ENCODE measurements at regions of chr7 and their contacts with region 1.

Region 1: DNA sequence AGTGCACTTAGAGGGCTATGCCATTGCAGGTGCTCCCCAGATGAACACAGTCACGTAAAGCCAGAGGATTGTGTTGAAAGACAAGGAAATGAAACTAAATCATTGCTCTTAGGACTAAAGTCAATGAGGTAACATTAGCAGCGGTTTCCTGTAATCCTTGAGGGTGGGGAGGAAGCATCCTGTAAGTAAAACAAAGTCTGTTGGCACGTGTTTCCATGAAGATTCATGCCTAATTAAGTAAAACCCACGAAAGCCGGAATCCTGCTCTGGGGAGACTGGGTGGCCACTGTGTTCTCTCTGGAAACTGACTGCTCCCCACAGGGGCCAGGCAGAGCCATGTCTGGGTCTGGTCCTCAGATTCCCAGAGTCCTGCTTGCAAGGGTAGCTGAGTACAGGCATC is 18.3 kb downstream of the STEAP1B start:
- DNase-seq: peak in 3 of 5 donors; percentile 26 to 58 (median 34)
- ATAC-seq: peak; percentile 29 to 87 (median 62)
- H3K4me3 ChIP-seq: no peak overlapping the region
- H3K27ac ChIP-seq: peak overlapping the region in 8 of 12 donors; percentile 16 to 64 (median 51)
- H3K4me1 ChIP-seq: peaks cover 0 to 12% (median 6%) of the 10 kb centered on the region in 12 donors
- H3K27me3 ChIP-seq: peaks cover 0 to 2% (median 0%) of the 10 kb centered on the region in 9 donors
- CTCF ChIP-seq: no peak
- POLR2A ChIP-seq: no peak

Region 2: GRCh38 chr7:21526007-21526406 is 955.7 kb before region 1 on chr7:
- intact Hi-C with region 1: no loop called
- DNase-seq: no peak
- ATAC-seq: no peak
- H3K4me3 ChIP-seq: no peak overlapping the region
- H3K27ac ChIP-seq: no peak overlapping the region
- H3K4me1 ChIP-seq: no peaks in the 10 kb centered on the region
- H3K27me3 ChIP-seq: no peaks in the 10 kb centered on the region
- CTCF ChIP-seq: peak in 8 of 12 donors; percentile 12 to 40 (median 29)
- POLR2A ChIP-seq: no peak

Region 3: DNA sequence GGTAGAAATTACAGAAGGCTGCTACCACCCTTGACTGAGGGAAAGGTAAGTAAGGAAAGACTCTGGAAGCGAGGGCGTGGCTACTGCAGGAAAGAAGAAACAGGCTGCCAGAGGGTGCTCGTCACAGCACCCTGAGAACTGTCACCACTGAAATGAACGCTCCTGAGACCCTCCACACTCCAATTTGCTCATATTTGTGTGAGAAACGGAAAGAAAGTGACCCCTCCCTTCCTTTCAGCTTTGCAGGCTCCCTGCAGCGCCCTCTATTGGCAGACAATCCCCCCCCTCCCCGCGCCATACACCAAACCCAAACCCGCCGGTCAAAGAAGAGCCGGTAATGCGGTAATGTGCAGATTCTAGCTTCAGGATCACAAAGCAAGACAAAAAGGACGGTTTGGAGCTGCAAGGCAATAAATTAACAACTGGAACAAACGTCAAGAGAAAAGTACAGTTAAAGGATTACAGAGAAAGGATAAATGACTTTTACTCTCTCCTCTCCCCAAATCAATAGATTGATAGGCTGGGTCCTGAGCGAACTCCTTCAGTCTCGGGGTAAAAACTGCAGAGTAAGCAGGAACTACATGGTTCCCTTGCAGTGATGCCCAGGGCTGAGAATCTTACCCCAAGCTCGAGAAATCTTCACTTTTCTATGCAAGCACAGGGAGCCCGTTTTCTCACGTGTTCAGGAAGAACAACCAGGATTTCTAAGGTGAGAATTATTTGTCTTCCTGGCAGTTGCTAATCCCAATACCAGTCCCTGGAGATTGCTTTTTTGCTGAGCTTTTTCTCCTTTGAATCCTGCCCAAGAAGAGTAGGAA is 29.4 kb before region 1 on chr7:
- intact Hi-C with region 1: loop called in 1 of 10 experiments (anchors 1 kb)
- DNase-seq: peak; percentile 48 to 74 (median 57)
- ATAC-seq: peak; percentile 58 to 88 (median 72)
- H3K4me3 ChIP-seq: peak overlapping the region in 9 of 12 donors; percentile 22 to 44 (median 31)
- H3K27ac ChIP-seq: peak overlapping the region in 3 of 12 donors; percentile 23 to 28 (median 24)
- H3K4me1 ChIP-seq: peaks cover 0 to 14% (median 5%) of the 10 kb centered on the region in 12 donors
- H3K27me3 ChIP-seq: peaks cover 0 to 22% (median 0%) of the 10 kb centered on the region in 9 donors
- CTCF ChIP-seq: peak; percentile 51 to 87 (median 76)
- POLR2A ChIP-seq: no peak

Region 4: DNA sequence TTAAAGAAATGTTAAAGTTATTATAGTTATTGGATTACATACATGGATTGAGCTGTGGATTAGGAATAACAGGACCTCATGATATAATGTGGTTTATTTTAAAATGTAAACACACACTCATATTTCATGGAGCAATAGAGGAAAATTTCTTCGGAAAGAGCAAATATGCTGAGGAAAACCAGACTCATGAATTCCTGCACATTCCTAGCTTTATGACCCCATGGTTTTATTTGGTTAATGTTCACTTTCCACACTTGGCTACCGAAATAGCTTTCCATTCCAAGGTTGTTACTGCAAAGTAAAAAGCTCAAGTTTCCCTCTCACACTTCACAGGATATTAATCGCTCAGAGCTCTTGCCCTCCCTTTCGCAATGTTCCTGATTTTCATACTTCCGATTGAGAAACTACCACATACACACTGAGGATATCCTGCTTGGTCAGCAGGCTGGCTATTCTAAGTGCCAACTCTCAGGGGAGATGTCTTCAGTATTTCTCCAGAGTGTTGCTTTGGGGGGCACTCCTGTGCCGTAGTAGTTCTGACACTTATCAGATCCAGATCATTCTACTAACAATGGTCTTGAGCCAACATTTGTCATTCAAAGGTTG is 95.8 kb after region 1 on chr7:
- intact Hi-C with region 1: no loop called
- DNase-seq: peak in 2 of 5 donors; percentile 36 to 40
- ATAC-seq: peak; percentile 76 to 94 (median 92)
- H3K4me3 ChIP-seq: no peak overlapping the region
- H3K27ac ChIP-seq: peak overlapping the region in 11 of 12 donors; percentile 33 to 91 (median 67)
- H3K4me1 ChIP-seq: peaks cover 0 to 43% (median 8%) of the 10 kb centered on the region in 12 donors
- H3K27me3 ChIP-seq: no peaks in the 10 kb centered on the region
- CTCF ChIP-seq: peak in 2 of 12 donors; percentile 11 to 12
- POLR2A ChIP-seq: no peak

Measured in heart left ventricle (tissue), 16 donors.